ENCODE measurements at regions of chr11 and their contacts with region 1.

Region 1: DNA sequence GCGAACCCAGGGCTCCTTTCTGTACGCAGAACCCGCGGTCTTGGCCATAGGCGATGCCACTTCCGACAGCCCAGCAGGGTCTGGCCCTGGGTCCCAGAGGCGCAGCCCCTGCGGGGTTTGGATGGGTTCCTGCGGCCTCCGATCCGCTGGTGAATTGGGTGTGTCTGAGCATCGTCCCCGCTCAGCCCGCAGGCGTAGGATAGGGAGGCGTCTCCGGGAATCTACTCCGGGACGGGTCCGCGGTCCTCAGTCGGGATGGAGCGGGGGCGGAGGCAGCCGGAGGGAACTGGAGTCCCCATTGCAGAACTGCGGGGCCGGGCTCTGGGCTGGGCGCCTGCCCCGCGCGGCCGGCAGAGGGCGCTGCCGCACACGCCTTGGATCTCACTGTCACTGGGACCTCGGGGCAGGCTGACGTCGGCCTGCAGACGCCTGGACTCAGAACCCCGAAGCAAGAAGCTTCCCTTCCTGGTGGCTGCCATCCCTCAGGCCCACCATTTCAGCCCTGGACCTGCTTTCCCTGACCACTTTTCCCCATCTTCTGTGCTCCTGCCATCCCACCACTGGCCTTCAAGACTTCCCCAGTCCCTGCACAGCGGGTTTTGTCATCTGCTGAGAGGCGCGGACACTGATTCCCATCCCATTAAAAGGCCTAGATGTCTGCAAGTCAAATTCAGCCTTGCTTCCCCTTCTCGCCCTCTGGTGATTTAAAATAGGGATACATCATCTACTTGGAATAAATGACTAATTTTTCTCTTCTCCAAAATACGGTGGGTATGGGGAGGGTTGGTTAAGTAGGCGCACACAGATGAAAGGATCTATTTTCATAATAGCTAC is 38.3 kb upstream of the CREB3L1 start:
- DNase-seq: peak; percentile 85 to 86
- ATAC-seq: peak; percentile 57 to 87
- H3K4me3 ChIP-seq: peak overlapping the region; percentile 53
- H3K27ac ChIP-seq: peak overlapping the region; percentile 78 to 89
- H3K4me1 ChIP-seq: peaks cover 36% of the 10 kb centered on the region
- CTCF ChIP-seq: peak; percentile 95
- EP300 ChIP-seq: no peak
- POLR2A ChIP-seq: no peak
- RAD21 ChIP-seq: peak; percentile 89 to 96

Region 2: DNA sequence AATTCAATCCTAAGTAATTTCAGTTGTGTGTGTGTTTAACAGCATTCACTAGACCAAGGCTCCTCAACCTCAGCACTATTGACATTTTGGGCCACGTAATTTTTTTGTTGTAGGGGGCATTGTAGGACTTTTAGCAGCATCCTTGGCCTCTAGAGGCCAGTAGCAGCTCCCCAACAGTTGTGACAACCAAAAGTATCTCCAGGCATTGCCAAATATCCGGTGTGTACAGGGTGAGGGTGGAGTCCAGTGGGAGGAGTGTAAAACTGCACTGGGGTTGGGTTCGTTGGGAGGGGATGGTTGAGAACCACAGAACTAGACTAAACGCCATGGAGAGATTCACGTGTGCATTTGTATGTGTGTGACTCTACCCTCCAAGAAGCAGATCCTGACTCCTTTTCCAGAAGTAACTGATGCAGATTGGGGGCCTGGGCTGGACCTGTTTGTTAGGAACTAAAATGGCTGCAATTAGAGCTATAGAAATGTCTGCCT is 112.0 kb before region 1 on chr11:
- CTCF ChIA-PET with region 1: interaction called, 26 read pairs
- POLR2A ChIA-PET with region 1: interaction called, 18 read pairs
- DNase-seq: peak; percentile 91 to 97
- ATAC-seq: peak; percentile 97 to 99
- H3K4me3 ChIP-seq: no peak overlapping the region
- H3K27ac ChIP-seq: peak overlapping the region; percentile 43 to 79
- H3K4me1 ChIP-seq: peaks cover 20% of the 10 kb centered on the region
- CTCF ChIP-seq: peak; percentile 65
- EP300 ChIP-seq: no peak
- POLR2A ChIP-seq: no peak
- RAD21 ChIP-seq: peak; percentile 57 to 71

Region 3: DNA sequence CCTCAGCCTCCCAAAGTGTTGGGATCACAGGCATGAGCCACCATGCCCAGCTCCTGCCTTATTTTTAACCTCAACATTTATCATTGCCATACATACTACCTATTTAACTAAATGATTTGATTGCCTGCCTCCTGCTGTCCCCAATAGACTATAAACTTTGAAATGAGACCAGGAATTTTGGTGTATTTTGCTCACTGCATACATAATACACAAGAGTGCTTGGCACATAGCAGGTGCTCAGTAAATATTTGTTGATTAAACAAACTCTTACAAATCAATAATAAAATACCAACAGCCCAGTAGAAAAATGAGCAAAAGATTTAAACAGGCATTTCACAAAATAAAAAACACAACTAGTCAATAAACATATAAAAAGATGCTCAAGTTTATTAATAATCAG is 68.4 kb before region 1 on chr11:
- CTCF ChIA-PET with region 1: no interaction called
- POLR2A ChIA-PET with region 1: no interaction called
- DNase-seq: no peak
- ATAC-seq: no peak
- H3K4me3 ChIP-seq: no peak overlapping the region
- H3K27ac ChIP-seq: no peak overlapping the region
- H3K4me1 ChIP-seq: no peaks in the 10 kb centered on the region
- CTCF ChIP-seq: no peak
- EP300 ChIP-seq: no peak
- POLR2A ChIP-seq: no peak
- RAD21 ChIP-seq: no peak

Region 4: DNA sequence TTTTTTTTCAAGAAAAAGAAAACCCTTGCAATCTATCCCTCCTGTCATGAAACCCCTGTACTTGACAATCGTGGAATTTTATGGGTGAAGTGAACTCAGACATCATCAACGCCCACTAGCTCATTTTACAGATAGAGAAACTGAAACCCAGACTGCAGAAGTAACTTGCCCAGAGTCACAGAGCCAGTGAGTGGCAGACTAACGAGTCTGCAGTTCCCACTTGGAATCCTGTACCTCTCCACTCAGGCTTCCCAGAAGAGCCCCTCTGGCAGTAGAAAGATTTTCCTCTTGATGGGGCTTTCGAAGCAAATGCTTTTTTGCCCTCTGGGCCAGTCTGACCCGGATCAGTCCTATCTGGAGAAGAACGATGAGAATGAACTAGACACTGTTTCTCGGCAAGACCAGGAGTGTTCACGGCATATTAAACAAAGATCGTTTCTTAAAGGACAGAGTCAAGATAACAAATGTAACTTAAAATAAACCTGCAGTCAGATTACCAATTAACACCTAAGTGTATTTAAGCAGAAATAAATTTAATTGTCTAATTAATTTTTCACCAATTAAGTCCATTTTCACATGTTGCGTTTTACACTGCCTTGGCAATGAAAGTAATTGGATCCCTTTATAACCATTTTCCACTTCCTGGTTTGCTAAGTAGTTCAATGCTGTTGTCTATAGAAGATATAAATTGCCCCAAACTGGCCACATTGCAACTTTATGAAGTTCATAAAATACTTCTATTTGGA is 23.0 kb before region 1 on chr11:
- CTCF ChIA-PET with region 1: interaction called, 10 read pairs
- POLR2A ChIA-PET with region 1: interaction called, 3 read pairs
- DNase-seq: no peak
- ATAC-seq: no peak
- H3K4me3 ChIP-seq: no peak overlapping the region
- H3K27ac ChIP-seq: no peak overlapping the region
- H3K4me1 ChIP-seq: no peaks in the 10 kb centered on the region
- CTCF ChIP-seq: no peak
- EP300 ChIP-seq: no peak
- POLR2A ChIP-seq: no peak
- RAD21 ChIP-seq: no peak

Region 5: DNA sequence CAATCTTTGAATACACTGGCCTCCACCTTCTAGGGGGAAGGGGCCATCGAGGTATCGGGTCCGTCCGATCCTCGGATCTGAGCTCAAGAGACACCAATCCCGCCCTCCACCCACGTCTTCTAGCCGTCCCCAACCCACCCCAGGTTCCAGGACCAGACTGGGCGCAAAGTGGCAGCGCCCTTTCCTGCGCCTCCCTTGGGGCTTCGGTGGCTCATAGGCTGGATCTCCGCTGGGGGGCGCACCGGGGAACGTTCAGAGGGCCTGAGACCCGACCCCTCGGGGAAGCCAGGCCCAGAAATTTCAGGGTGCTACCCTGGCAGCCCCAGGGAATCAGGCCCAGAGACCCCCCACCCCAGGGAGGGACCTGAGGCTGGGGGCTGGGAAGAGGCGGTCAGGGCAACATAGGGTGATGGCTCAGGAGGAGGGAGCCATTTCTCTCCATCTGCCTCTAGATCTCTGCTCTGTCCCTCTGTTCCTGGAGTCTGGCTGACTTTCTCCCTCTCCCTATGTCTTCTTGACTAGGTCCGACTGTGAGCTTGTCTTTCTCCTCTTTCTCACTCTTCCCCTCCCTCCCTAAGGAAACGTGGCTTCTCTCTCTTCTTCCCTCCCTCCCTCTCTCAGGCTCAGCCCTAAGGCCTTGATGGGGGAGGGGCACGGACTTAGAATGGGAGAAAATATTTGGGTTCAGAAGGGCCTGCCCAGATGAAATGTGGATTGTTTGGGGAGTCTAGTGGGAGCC is 39.4 kb after region 1 on chr11:
- CTCF ChIA-PET with region 1: interaction called, 50 read pairs
- POLR2A ChIA-PET with region 1: interaction called, 15 read pairs
- DNase-seq: no peak
- ATAC-seq: peak; percentile 49 to 75; a peak in 5 of 6 replicates
- H3K4me3 ChIP-seq: peak overlapping the region; percentile 53
- H3K27ac ChIP-seq: peak overlapping the region in 1 of 2 experiments; percentile 79; a peak in 3 of 6 replicates
- H3K4me1 ChIP-seq: peaks cover 43% of the 10 kb centered on the region
- CTCF ChIP-seq: peak; percentile 41
- EP300 ChIP-seq: no peak
- POLR2A ChIP-seq: no peak
- RAD21 ChIP-seq: peak; percentile 17 to 19; a peak in 2 of 5 replicates

Region 6: GRCh38 chr11:46308631-46309419 is 69.6 kb after region 1 on chr11:
- CTCF ChIA-PET with region 1: interaction called, 872 read pairs
- POLR2A ChIA-PET with region 1: interaction called, 25 read pairs
- DNase-seq: peak; percentile 80 to 91
- ATAC-seq: peak; percentile 90 to 95
- H3K4me3 ChIP-seq: no peak overlapping the region
- H3K27ac ChIP-seq: peak overlapping the region in 1 of 2 experiments; percentile 44; a peak in 1 of 6 replicates
- H3K4me1 ChIP-seq: peaks cover 20% of the 10 kb centered on the region
- CTCF ChIP-seq: peak; percentile 90
- EP300 ChIP-seq: no peak
- POLR2A ChIP-seq: no peak
- RAD21 ChIP-seq: peak; percentile 93 to 94

Region 7: DNA sequence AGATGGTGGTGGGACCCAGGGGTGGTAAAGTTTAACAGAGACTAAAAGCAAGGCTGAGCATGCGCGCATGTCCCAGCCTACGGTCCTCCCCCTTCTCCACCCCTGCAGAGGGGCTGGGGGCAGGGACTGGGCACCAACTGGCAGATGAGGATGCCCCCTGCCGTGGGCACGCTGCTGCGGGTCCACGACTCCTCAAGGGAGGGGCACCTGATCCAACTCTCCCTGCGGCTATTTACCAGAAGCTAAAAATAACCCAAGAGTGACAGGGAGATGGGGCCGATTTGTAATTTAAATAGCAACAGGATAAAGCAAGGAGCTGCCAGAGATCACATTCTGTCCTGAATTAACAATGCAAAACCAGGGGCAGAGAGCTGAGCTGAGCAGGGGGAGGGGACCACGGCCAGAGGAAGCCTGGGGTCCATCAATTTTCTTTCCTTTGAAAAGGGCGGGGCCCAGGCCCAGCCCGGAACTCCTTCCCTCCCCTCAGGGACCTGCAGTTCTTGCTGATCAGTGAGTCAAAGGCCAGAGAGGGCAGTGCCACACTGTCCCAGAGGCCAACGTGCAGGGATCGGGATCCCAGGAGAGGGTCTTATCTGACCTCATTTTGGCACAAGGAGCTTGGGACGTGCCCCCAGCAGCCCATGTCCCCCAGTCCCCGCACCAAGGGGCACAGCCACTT is 99.9 kb after region 1 on chr11:
- CTCF ChIA-PET with region 1: interaction called, 18 read pairs
- POLR2A ChIA-PET with region 1: interaction called, 10 read pairs
- DNase-seq: no peak
- ATAC-seq: peak in 1 of 2 experiments; percentile 58; a peak in 3 of 6 replicates
- H3K4me3 ChIP-seq: no peak overlapping the region
- H3K27ac ChIP-seq: peak overlapping the region in 1 of 2 experiments; percentile 52; a peak in 4 of 6 replicates
- H3K4me1 ChIP-seq: peaks cover 14% of the 10 kb centered on the region
- CTCF ChIP-seq: no peak
- EP300 ChIP-seq: no peak
- POLR2A ChIP-seq: no peak
- RAD21 ChIP-seq: no peak

Measured in A549 (cell line).